ENCODE measurements at regions of chr1 and their contacts with region 1.

Region 1: GRCh38 chr1:182839209-182840065 is at the start of gene DHX9:
- DNase-seq: peak; percentile 89 to 100 (median 97)
- ATAC-seq: peak; percentile 84 to 88
- H3K4me3 Mint-ChIP-seq: peak within 1 kb of the TSS; percentile 93 to 100 (median 98)
- H3K27ac Mint-ChIP-seq: peak within 1 kb of the TSS; percentile 96 to 99 (median 98)
- H3K4me1 Mint-ChIP-seq: peaks cover 26 to 56% (median 48%) of the 10 kb centered on the region in 4 donors
- H3K27me3 Mint-ChIP-seq: peaks cover 0 to 3% (median 0%) of the 10 kb centered on the region in 5 donors
- polyA plus RNA-seq, gene DHX9: 106 to 124 (median 114) TPM

Region 2: GRCh38 chr1:182778862-182779261 is 60.6 kb before region 1 on chr1:
- POLR2A ChIA-PET with region 1: no interaction called
- DNase-seq: no peak
- ATAC-seq: no peak
- H3K4me3 Mint-ChIP-seq: no peak overlapping the region
- H3K27ac Mint-ChIP-seq: no peak overlapping the region
- H3K4me1 Mint-ChIP-seq: peaks cover 3 to 10% (median 4%) of the 10 kb centered on the region in 4 donors
- H3K27me3 Mint-ChIP-seq: peaks cover 4 to 27% (median 11%) of the 10 kb centered on the region in 5 donors

Region 3: DNA sequence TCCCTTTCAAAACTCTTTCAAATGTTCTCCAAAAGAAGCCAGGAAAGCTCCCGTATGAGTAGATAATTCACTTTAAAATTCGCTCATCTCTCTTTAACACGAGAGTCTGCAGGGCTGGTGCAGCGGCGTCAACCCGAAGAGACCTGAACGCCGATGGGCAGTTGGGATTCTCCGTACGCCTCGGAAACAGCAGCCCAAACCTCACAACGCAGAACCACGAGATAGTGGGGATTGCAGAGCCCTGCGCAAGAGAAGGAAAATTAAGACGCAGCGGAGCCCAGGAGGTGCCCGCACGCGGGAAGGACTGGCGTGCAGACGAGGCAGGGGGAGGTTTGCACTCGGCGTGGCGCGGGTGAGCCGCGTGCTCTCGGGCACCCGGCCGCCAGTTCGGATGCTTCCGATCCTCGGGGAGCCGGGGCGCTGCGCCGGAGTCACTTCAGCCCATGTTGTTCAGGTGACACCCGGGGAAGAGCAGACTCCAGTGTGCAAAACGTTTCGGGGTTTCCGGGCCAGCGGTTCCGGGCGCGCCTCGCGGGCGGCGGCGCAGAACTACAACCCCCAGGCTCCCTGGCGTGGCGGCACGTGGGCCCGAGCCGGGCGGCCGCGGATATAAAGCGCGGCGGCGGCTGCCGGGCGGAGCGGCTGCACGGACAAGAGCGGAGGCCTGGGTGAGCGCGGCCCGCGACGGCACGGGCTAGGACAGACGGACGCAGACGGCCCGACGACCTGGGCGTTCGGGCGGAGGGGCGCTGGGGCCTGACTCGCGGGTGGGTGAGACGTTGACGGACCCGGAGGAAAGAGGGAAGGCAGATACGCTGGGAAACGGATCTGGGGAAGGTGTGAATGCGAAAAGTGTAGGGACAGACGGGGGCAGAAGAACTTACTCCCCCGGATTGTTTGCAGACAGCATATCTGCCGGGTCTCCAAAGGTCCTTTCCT is 50.0 kb before region 1 on chr1 and contains the start of gene NPL:
- POLR2A ChIA-PET with region 1: interaction called, 11 read pairs
- DNase-seq: peak; percentile 74 to 88 (median 82)
- ATAC-seq: peak; percentile 95 to 97
- H3K4me3 Mint-ChIP-seq: peak within 1 kb of the TSS; percentile 87 to 96 (median 95)
- H3K27ac Mint-ChIP-seq: peak within 1 kb of the TSS; percentile 76 to 94 (median 86)
- H3K4me1 Mint-ChIP-seq: peaks cover 5 to 17% (median 11%) of the 10 kb centered on the region in 4 donors
- H3K27me3 Mint-ChIP-seq: peaks cover 0 to 3% (median 0%) of the 10 kb centered on the region in 5 donors
- polyA plus RNA-seq, gene NPL: 4.0 to 7.0 (median 6.2) TPM